Panc1 (cell line): ENCODE measurements at regions of chr6 and their contacts with region 1.

Region 1: GRCh38 chr6:147506704-147507114 is 1.8 kb upstream of the SAMD5 start:
- DNase-seq: no peak
- ATAC-seq: peak; percentile 79
- H3K4me3 ChIP-seq: peak overlapping the region; percentile 49 to 72
- H3K27ac ChIP-seq: no peak overlapping the region
- H3K4me1 ChIP-seq: peaks cover 7% of the 10 kb centered on the region
- H3K27me3 ChIP-seq: peaks cover 14% of the 10 kb centered on the region
- CTCF ChIP-seq: peak; percentile 93

Region 2: GRCh38 chr6:147390909-147391536 is 115.7 kb before region 1 on chr6:
- CTCF ChIA-PET with region 1: no interaction called
- POLR2A ChIA-PET with region 1: no interaction called
- in situ Hi-C with region 1: no loop called
- intact Hi-C with region 1: loop called (anchors 5 kb)
- DNase-seq: no peak
- ATAC-seq: no peak
- H3K4me3 ChIP-seq: no peak overlapping the region
- H3K27ac ChIP-seq: no peak overlapping the region
- H3K4me1 ChIP-seq: peaks cover 23% of the 10 kb centered on the region; the same call in 1 of the 2 replicates
- H3K27me3 ChIP-seq: no peaks in the 10 kb centered on the region
- CTCF ChIP-seq: peak; percentile 55; the same call in 1 of the 2 replicates

Region 3: DNA sequence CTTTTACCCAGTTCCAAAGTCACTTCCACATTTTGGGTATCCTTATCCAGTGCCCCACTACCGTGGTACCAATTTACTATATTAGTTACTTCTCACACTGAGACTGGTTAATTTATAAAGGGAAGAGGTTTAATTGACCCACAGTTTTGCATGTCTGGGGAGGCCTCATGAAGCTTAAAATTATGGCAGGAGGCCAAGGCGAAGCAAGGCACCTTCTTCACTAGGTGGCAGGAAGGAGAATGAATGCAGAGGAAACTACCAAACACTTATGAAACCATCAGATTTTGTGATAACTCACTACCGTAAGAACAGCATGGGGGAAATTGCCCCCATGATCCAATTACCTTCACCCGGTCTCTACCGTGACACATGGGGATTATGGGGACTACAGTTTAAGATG is 104.9 kb before region 1 on chr6:
- CTCF ChIA-PET with region 1: no interaction called
- POLR2A ChIA-PET with region 1: no interaction called
- in situ Hi-C with region 1: no loop called
- intact Hi-C with region 1: no loop called
- DNase-seq: no peak
- ATAC-seq: no peak
- H3K4me3 ChIP-seq: no peak overlapping the region
- H3K27ac ChIP-seq: no peak overlapping the region
- H3K4me1 ChIP-seq: no peaks in the 10 kb centered on the region
- H3K27me3 ChIP-seq: no peaks in the 10 kb centered on the region
- CTCF ChIP-seq: no peak

Region 4: DNA sequence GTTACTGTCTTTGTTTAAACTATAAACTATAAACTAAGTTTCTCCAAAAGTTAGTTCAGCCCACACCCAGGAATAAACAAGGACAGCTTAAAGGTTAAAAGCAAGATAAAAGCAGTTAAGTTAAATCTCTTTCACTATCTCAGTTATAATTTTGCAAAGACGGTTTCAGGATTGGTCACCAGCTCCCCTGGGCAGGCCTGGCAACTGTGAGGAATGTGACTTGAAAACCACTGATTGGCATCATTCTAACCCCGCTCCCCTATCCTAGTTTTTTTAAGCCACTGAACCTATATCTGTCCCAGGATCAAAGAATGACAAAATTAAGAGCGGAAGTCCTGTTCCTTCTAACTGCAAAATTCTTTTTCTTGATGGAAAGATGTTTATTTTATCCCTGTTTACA is 36.1 kb after region 1 on chr6:
- CTCF ChIA-PET with region 1: no interaction called
- POLR2A ChIA-PET with region 1: no interaction called
- in situ Hi-C with region 1: no loop called
- intact Hi-C with region 1: no loop called
- DNase-seq: no peak
- ATAC-seq: no peak
- H3K4me3 ChIP-seq: no peak overlapping the region
- H3K27ac ChIP-seq: no peak overlapping the region
- H3K4me1 ChIP-seq: no peaks in the 10 kb centered on the region
- H3K27me3 ChIP-seq: no peaks in the 10 kb centered on the region
- CTCF ChIP-seq: no peak

Region 5: GRCh38 chr6:147970975-147971374 is 464.3 kb after region 1 on chr6:
- CTCF ChIA-PET with region 1: no interaction called
- POLR2A ChIA-PET with region 1: no interaction called
- in situ Hi-C with region 1: no loop called
- intact Hi-C with region 1: loop called (anchors 10 kb)
- DNase-seq: no peak
- ATAC-seq: peak; percentile 62; the same call in 1 of the 2 replicates
- H3K4me3 ChIP-seq: no peak overlapping the region
- H3K27ac ChIP-seq: no peak overlapping the region
- H3K4me1 ChIP-seq: no peaks in the 10 kb centered on the region
- H3K27me3 ChIP-seq: no peaks in the 10 kb centered on the region
- CTCF ChIP-seq: peak; percentile 29; the same call in 1 of the 2 replicates

Region 6: GRCh38 chr6:148166339-148166968 is 659.7 kb after region 1 on chr6:
- CTCF ChIA-PET with region 1: interaction called, 3 read pairs
- POLR2A ChIA-PET with region 1: no interaction called
- in situ Hi-C with region 1: no loop called
- intact Hi-C with region 1: loop called (anchors 2 kb)
- DNase-seq: no peak
- ATAC-seq: no peak
- H3K4me3 ChIP-seq: no peak overlapping the region
- H3K27ac ChIP-seq: no peak overlapping the region
- H3K4me1 ChIP-seq: no peaks in the 10 kb centered on the region
- H3K27me3 ChIP-seq: no peaks in the 10 kb centered on the region
- CTCF ChIP-seq: peak; percentile 69; the same call in 1 of the 2 replicates

Region 7: DNA sequence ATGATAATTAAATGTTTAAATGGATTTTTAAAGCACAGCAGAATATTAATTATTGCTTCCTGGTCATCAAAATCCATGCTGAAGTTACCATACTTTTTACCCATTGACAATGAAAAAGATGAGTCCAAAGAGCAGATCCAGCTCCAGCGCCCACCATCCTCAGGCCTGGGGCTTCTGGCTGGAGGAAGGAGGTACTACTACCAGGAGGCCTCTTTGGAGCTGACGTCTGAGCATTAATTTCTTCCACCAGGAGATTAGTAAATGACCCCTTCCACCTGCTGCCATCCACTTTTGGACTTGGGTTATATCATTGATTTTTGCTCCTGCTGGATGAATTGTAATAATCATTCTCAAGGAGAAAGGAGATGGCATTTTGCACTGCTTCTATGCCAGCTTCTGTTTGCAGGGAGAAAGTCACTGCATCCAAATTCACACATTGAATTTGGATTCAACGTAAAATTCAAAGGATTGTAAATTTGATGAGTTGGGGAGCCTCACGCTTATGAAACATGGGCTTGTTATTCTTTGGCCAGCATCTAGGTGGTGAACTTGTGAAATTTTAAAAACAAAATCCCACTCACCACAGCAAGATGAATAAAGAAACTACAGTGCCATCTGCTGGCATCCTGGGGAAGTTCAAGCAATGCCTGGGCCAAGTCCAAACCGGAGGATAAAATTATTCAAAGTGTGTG is 957.8 kb after region 1 on chr6:
- CTCF ChIA-PET with region 1: no interaction called
- POLR2A ChIA-PET with region 1: no interaction called
- in situ Hi-C with region 1: no loop called
- intact Hi-C with region 1: loop called (anchors 10 kb)
- DNase-seq: peak; percentile 48
- ATAC-seq: peak; percentile 80
- H3K4me3 ChIP-seq: no peak overlapping the region
- H3K27ac ChIP-seq: no peak overlapping the region
- H3K4me1 ChIP-seq: no peaks in the 10 kb centered on the region
- H3K27me3 ChIP-seq: no peaks in the 10 kb centered on the region
- CTCF ChIP-seq: peak; percentile 86